ENCODE measurements at regions of chr11 and their contacts with region 1.

Region 1: DNA sequence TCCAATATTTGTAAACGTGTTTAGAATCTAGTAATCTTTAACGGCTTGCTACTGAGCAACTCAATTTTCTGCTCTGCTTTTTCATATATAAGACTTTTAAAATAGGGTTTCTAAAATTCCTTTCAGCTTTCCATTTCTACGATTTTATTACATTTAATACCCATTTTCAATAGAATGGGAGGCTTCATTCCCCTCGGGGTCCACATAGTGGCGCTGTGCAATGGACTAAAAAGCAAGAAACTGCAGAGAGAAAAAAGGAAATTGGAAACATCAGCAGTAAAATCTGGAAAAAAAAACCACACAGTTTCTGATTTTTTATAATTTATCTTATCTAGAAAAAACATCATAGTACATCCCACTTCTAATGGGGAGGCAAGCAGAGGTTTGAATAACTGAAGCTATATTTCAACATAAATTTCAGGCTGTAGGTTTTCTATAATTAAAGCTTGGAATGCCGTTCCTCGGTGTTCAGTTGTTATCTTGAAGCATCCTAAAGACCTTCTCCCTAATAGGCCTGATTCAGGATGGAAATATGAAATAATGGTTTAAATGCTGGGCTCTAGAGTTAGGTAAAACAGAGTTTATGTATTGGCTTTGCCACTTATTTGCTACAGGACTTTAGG is 18.7 kb upstream of the JHY start:
- DNase-seq: no peak
- H3K4me3 ChIP-seq: no peak overlapping the region
- H3K27ac ChIP-seq: no peak overlapping the region
- H3K4me1 ChIP-seq: no peaks in the 10 kb centered on the region
- H3K27me3 ChIP-seq: no peaks in the 10 kb centered on the region
- CTCF ChIP-seq: peak; percentile 45 to 58 (median 48)
- POLR2A ChIP-seq: no peak

Region 2: DNA sequence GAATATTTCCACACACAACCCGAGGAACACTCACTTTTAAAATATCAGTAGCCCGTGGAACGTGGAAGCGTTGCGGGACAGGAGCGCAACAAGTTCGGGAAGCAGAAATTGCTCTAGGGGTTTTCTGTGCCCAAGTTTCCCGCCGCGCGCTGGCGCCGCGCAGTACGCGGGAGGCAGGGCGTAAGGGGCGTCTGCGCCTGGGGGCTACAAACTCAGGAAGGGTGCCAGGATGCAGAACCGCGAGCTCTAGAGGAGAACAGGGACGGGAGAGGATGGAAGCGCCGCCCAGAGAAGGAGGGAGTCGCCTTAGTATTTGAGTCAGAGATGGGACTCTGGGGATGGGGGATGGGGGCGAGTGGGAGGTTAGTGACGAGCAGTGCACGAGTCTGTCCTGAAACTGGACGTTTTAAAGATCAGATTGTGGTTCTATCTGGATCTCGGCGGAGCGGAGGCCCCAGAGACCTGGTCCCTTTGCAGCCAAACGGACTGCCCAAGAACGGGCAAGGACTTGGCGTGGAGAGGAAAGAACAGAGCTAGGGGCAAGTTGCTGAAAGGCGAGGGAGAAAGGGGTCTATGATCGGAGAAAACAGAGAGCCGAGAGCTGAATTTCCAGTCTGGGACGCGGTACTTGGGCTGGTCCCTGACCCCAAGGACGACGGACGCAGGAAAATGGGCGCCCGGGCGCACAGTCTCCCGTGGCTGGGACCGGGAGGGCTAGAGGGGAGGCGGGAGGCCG is 113.1 kb after region 1 on chr11:
- intact Hi-C with region 1: no loop called
- DNase-seq: no peak
- H3K4me3 ChIP-seq: peak overlapping the region in 1 of 2 donors; percentile 21
- H3K27ac ChIP-seq: no peak overlapping the region
- H3K4me1 ChIP-seq: peaks cover 18% of the 10 kb centered on the region
- H3K27me3 ChIP-seq: peaks cover 7% of the 10 kb centered on the region
- CTCF ChIP-seq: no peak
- POLR2A ChIP-seq: no peak

Region 3: DNA sequence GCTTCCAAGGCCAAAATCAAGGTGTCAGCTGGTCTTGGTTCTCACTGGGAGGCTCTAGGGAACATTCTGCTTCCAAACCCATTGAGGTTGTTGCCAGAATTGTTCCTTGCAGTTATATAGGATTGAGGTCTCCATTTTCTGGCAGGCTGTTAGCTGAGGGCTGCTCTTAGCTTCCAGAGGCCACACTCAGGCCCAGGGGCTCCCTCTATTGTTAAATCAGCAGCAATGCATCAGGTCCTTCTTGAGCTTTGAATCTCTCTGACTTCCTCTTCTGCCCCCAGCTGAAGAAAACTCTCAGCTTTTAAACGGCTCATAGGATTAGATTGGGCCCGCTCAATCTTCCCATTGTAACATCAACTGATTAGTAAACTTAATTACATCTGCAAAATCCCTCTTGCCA is 157.2 kb after region 1 on chr11:
- intact Hi-C with region 1: loop called (anchors 10 kb)
- DNase-seq: no peak
- H3K4me3 ChIP-seq: no peak overlapping the region
- H3K27ac ChIP-seq: no peak overlapping the region
- H3K4me1 ChIP-seq: no peaks in the 10 kb centered on the region
- H3K27me3 ChIP-seq: no peaks in the 10 kb centered on the region
- CTCF ChIP-seq: no peak
- POLR2A ChIP-seq: no peak